Spleen (tissue), 13 donors: ENCODE measurements at regions of chr16 and their contacts with region 1.

Region 1: DNA sequence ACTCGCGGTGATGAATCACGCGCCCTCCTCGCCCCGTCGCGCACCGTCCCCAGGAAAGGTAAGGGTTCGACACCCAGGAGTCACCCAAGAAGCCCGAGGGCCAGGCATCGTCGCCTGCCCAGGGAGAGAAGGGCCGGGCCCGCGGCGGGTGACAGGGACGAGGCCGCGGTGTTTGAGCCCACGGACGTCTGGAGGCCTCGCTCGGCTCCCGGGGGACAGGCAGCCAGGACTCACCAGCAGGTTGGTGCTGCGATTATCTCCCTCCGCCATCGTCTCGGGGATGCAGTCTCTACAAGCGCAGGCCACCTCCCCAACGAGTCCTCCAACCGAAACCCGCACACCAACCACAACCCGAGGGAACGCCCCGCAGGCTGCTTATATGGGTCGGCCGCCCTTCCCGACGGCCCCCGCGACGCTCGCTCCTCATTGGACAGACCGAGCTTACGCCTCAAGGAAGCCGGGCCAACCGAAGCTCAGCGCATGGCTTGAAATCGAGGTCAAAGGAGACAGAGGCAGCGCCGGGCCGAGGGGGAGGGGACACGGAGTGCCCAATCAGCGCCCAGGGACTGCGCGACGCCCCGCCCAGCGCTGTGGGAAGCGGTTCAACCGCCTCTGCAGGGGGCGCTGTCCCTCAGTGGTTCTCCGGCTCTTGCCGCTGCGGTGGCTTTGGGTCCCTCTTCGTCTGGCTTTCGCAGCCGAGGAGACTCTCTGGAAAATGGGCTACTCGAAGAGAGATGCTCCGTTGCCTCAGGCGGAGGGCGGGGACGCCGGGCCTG is at the start of gene ARL6IP1:
- DNase-seq: peak; percentile 99
- H3K4me3 ChIP-seq: peak within 1 kb of the TSS; percentile 76 to 97 (median 89)
- H3K27ac ChIP-seq: peak within 1 kb of the TSS; percentile 85 to 97 (median 92)
- H3K4me1 ChIP-seq: peaks cover 23 to 89% (median 59%) of the 10 kb centered on the region in 6 donors
- H3K27me3 ChIP-seq: no peaks in the 10 kb centered on the region
- CTCF ChIP-seq: peak; percentile 97 to 100 (median 99)
- POLR2A ChIP-seq: peak; percentile 57 to 98 (median 96)
- total RNA-seq, gene ARL6IP1: 76.1 to 245 (median 99.1) TPM

Region 2: GRCh38 chr16:18841833-18842525 is 40.6 kb after region 1 on chr16:
- intact Hi-C with region 1: no loop called
- DNase-seq: no peak
- H3K4me3 ChIP-seq: no peak overlapping the region
- H3K27ac ChIP-seq: no peak overlapping the region
- H3K4me1 ChIP-seq: no peaks in the 10 kb centered on the region
- H3K27me3 ChIP-seq: no peaks in the 10 kb centered on the region
- CTCF ChIP-seq: no peak
- POLR2A ChIP-seq: no peak

Region 3: GRCh38 chr16:18932243-18932981 is 131.0 kb after region 1 on chr16:
- intact Hi-C with region 1: loop called (anchors 10 kb)
- DNase-seq: no peak
- H3K4me3 ChIP-seq: no peak overlapping the region
- H3K27ac ChIP-seq: no peak overlapping the region
- H3K4me1 ChIP-seq: peaks cover 0 to 1% (median 0%) of the 10 kb centered on the region in 6 donors
- H3K27me3 ChIP-seq: no peaks in the 10 kb centered on the region
- CTCF ChIP-seq: no peak
- POLR2A ChIP-seq: no peak

Region 4: DNA sequence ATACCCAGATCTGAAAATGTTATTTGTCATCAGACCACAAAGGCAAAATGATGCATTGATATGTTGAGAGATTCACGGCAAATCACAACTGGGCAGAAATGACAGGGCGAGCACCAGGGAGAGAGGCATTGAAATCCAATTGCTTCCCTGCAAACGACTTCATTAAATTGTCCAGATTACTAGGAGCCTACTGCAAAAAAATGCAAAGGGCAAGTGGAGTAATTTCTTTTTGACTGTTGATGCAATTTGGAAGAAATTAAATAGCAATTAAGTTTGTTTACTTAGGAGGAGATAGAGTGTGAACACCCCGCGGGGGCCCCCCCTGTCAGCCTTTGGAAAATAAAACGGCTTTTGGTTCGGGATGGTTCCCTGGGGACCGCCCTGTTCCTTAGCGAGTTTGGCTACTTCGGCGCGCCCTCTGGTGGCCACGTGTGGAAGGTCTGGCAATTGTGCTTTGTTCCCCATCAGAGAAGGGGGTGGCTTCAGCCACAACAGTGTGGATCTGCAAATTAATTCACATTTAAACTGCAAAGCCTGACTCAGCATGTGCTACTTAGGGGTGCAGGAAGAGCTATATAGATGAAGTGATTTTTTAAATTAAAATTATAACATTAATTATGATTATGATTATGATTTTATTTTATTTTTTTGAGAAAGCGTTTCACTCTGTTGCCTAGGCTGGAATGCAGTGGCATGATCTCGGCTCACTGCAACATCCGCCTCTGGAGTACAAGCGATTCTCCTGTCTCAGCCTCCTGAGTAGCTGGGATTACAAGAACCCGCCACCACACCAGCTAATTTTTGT is 167.9 kb after region 1 on chr16:
- intact Hi-C with region 1: loop called (anchors 10 kb)
- DNase-seq: peak; percentile 94
- H3K4me3 ChIP-seq: peak overlapping the region in 4 of 8 donors; percentile 15 to 63 (median 28)
- H3K27ac ChIP-seq: no peak overlapping the region
- H3K4me1 ChIP-seq: peaks cover 0 to 9% (median 7%) of the 10 kb centered on the region in 6 donors
- H3K27me3 ChIP-seq: no peaks in the 10 kb centered on the region
- CTCF ChIP-seq: peak; percentile 66 to 96 (median 92)
- POLR2A ChIP-seq: no peak